ENCODE measurements at regions of chrX and their contacts with region 1.

Region 1: GRCh38 chrX:115449742-115450141 is 111.2 kb upstream of the PLS3 start:
- DNase-seq: peak; percentile 54 to 56
- ATAC-seq: peak in 7 of 8 donors; percentile 31 to 73 (median 49)
- H3K4me3 ChIP-seq: no peak overlapping the region
- H3K27ac ChIP-seq: peak overlapping the region in 2 of 10 donors; percentile 15 to 29
- H3K4me1 ChIP-seq: peaks cover 0 to 17% (median 4%) of the 10 kb centered on the region in 9 donors
- H3K27me3 ChIP-seq: peaks cover 0 to 57% (median 0%) of the 10 kb centered on the region in 7 donors
- CTCF ChIP-seq: no peak

Region 2: GRCh38 chrX:115362334-115363095 is 87.2 kb before region 1 on chrX:
- intact Hi-C with region 1: loop called in 1 of 10 experiments (anchors 10 kb)
- DNase-seq: no peak
- ATAC-seq: no peak
- H3K4me3 ChIP-seq: no peak overlapping the region
- H3K27ac ChIP-seq: no peak overlapping the region
- H3K4me1 ChIP-seq: peaks cover 0 to 11% (median 0%) of the 10 kb centered on the region in 9 donors
- H3K27me3 ChIP-seq: peaks cover 0 to 63% (median 0%) of the 10 kb centered on the region in 7 donors
- CTCF ChIP-seq: no peak

Region 3: DNA sequence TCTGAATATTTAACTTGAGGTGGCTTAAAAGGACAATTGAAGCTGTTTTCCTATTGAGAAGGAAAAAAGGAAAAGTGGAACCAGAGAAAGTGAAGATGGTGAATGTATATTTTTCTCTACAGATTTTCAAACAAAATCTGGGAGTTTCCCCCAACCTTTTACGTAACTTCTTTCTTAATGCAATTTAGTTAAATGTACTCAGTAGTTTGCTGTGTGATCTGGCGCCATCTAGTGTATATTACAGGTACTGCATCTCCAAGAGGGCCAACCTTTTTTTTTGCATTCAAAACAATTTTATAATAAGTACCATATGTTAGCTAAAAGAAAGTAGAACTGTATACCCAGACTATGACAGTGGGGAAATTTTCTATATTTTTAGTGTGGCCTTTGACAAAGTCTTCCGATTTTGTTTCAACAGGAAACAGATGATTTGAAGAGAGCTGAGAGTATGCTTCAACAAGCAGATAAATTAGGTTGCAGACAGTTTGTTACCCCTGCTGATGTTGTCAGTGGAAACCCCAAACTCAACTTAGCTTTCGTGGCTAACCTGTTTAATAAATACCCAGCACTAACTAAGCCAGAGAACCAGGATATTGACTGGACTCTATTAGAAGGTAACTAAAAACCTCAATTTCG is 193.3 kb after region 1 on chrX:
- intact Hi-C with region 1: loop called in 1 of 10 experiments (anchors 10 kb)
- DNase-seq: peak in 1 of 2 donors; percentile 17
- ATAC-seq: peak in 2 of 8 donors; percentile 55 to 69
- H3K4me3 ChIP-seq: no peak overlapping the region
- H3K27ac ChIP-seq: peak overlapping the region in 6 of 10 donors; percentile 1 to 62 (median 44)
- H3K4me1 ChIP-seq: peaks cover 0 to 34% (median 2%) of the 10 kb centered on the region in 9 donors
- H3K27me3 ChIP-seq: peaks cover 0 to 66% (median 0%) of the 10 kb centered on the region in 7 donors
- CTCF ChIP-seq: peak; percentile 76 to 99 (median 82)

Measured in heart right ventricle (tissue), 16 donors.